Caco-2 (cell line): ENCODE measurements at regions of chr15 and their contacts with region 1.

Region 1: GRCh38 chr15:84570164-84570735 is 30.6 kb upstream of the ZSCAN2 start:
- DNase-seq: no peak
- H3K4me3 ChIP-seq: peak overlapping the region; percentile 74
- H3K4me3 Mint-ChIP-seq: peak overlapping the region; percentile 80
- H3K27ac Mint-ChIP-seq: peak overlapping the region; percentile 21
- H3K4me1 ChIP-seq: no peaks in the 10 kb centered on the region
- H3K4me1 Mint-ChIP-seq: no peaks in the 10 kb centered on the region
- H3K27me3 ChIP-seq: no peaks in the 10 kb centered on the region
- H3K27me3 Mint-ChIP-seq: no peaks in the 10 kb centered on the region
- CTCF ChIP-seq: no peak

Region 2: GRCh38 chr15:84582583-84583157 is 12.4 kb after region 1 on chr15:
- CTCF ChIA-PET with region 1: interaction called, 13 read pairs
- POLR2A ChIA-PET with region 1: no interaction called
- intact Hi-C with region 1: no loop called
- DNase-seq: no peak
- H3K4me3 ChIP-seq: no peak overlapping the region
- H3K4me3 Mint-ChIP-seq: no peak overlapping the region
- H3K27ac Mint-ChIP-seq: no peak overlapping the region
- H3K4me1 ChIP-seq: no peaks in the 10 kb centered on the region
- H3K4me1 Mint-ChIP-seq: peaks cover 14% of the 10 kb centered on the region
- H3K27me3 ChIP-seq: no peaks in the 10 kb centered on the region
- H3K27me3 Mint-ChIP-seq: peaks cover 7% of the 10 kb centered on the region
- CTCF ChIP-seq: no peak

Region 3: GRCh38 chr15:84706409-84706808 is 136.2 kb after region 1 on chr15:
- CTCF ChIA-PET with region 1: no interaction called
- POLR2A ChIA-PET with region 1: no interaction called
- intact Hi-C with region 1: no loop called
- DNase-seq: no peak
- H3K4me3 ChIP-seq: no peak overlapping the region
- H3K4me3 Mint-ChIP-seq: no peak overlapping the region
- H3K27ac Mint-ChIP-seq: no peak overlapping the region
- H3K4me1 ChIP-seq: 0 out of 2 replicates have a peak, but pooled peaks cover 4% of the 10 kb centered on the region
- H3K4me1 Mint-ChIP-seq: no peaks in the 10 kb centered on the region
- H3K27me3 ChIP-seq: no peaks in the 10 kb centered on the region
- H3K27me3 Mint-ChIP-seq: no peaks in the 10 kb centered on the region
- CTCF ChIP-seq: no peak